WTC11 (cell line): ENCODE measurements at regions of chr5 and their contacts with region 1.

Region 1: GRCh38 chr5:135174315-135175096 is 140.5 kb upstream of the PITX1 start:
- DNase-seq: peak; percentile 41
- ATAC-seq: peak; percentile 82
- H3K4me3 Mint-ChIP-seq: no peak overlapping the region
- H3K27ac Mint-ChIP-seq: no peak overlapping the region
- H3K4me1 Mint-ChIP-seq: peaks cover 7% of the 10 kb centered on the region
- H3K27me3 Mint-ChIP-seq: peaks cover 5% of the 10 kb centered on the region; the same call in 1 of the 2 replicates
- CTCF ChIP-seq: peak; percentile 24; the same call in 1 of the 2 replicates

Region 2: GRCh38 chr5:134825212-134825611 is 349.3 kb before region 1 on chr5:
- CTCF ChIA-PET with region 1: no interaction called
- POLR2A ChIA-PET with region 1: no interaction called
- DNase-seq: no peak
- ATAC-seq: no peak
- H3K4me3 Mint-ChIP-seq: no peak overlapping the region
- H3K27ac Mint-ChIP-seq: no peak overlapping the region
- H3K4me1 Mint-ChIP-seq: no peaks in the 10 kb centered on the region
- H3K27me3 Mint-ChIP-seq: no peaks in the 10 kb centered on the region
- CTCF ChIP-seq: no peak

Region 3: GRCh38 chr5:135191084-135191826 is 16.7 kb after region 1 on chr5:
- CTCF ChIA-PET with region 1: interaction called, 36 read pairs
- POLR2A ChIA-PET with region 1: no interaction called
- DNase-seq: peak; percentile 91
- ATAC-seq: peak; percentile 93
- H3K4me3 Mint-ChIP-seq: peak overlapping the region; percentile 59
- H3K27ac Mint-ChIP-seq: no peak overlapping the region
- H3K4me1 Mint-ChIP-seq: peaks cover 13% of the 10 kb centered on the region
- H3K27me3 Mint-ChIP-seq: peaks cover 53% of the 10 kb centered on the region
- CTCF ChIP-seq: peak; percentile 87